Breast epithelium (tissue), 4 donors: ENCODE measurements at regions of chr16 and their contacts with region 1.

Region 1: GRCh38 chr16:66270333-66270927 is 96.1 kb upstream of the CDH5 start:
- DNase-seq: peak; percentile 23 to 70
- H3K4me3 ChIP-seq: peak overlapping the region; percentile 16 to 67 (median 38)
- H3K27ac ChIP-seq: peak overlapping the region; percentile 52 to 75
- H3K4me1 ChIP-seq: no peaks in the 10 kb centered on the region
- H3K27me3 ChIP-seq: no peaks in the 10 kb centered on the region
- CTCF ChIP-seq: peak; percentile 51 to 95 (median 61)
- POLR2A ChIP-seq: no peak

Region 2: GRCh38 chr16:65547772-65548446 is 722.5 kb before region 1 on chr16:
- intact Hi-C with region 1: loop called (anchors 10 kb)
- DNase-seq: no peak
- H3K4me3 ChIP-seq: no peak overlapping the region
- H3K27ac ChIP-seq: peak overlapping the region; percentile 12 to 42
- H3K4me1 ChIP-seq: no peaks in the 10 kb centered on the region
- H3K27me3 ChIP-seq: no peaks in the 10 kb centered on the region
- CTCF ChIP-seq: no peak
- POLR2A ChIP-seq: no peak

Region 3: DNA sequence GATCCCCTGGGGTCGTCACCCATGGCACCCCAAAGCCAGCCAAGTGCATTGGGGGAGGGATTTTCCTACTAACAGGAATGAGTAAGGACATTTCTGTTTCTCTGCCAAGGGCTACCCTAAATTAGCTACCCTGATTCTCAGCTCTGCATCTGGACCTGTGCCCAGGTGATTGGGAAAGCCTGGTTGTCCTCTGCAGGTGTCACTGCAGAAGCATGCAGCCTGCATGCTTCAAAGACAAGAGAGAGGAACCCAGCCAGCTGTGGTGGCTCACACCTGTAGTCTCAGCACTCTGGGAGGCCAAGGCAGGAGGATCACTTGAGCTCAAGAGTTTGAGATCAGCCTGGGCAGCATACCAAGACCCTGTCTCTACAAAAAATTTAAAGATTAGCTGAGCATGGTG is 176.3 kb after region 1 on chr16:
- intact Hi-C with region 1: loop called (anchors 5 kb)
- DNase-seq: no peak
- H3K4me3 ChIP-seq: no peak overlapping the region
- H3K27ac ChIP-seq: no peak overlapping the region
- H3K4me1 ChIP-seq: no peaks in the 10 kb centered on the region
- H3K27me3 ChIP-seq: no peaks in the 10 kb centered on the region
- CTCF ChIP-seq: no peak
- POLR2A ChIP-seq: no peak